Mammary epithelial cell (primary cell): ENCODE measurements at regions of chr7 and their contacts with region 1.

Region 1: GRCh38 chr7:158869876-158870275 is 13.5 kb downstream of the DYNC2I1 start:
- DNase-seq: no peak
- H3K4me3 ChIP-seq: no peak overlapping the region
- H3K27ac ChIP-seq: no peak overlapping the region
- H3K4me1 ChIP-seq: no peaks in the 10 kb centered on the region
- H3K27me3 ChIP-seq: no peaks in the 10 kb centered on the region
- CTCF ChIP-seq: no peak

Region 2: GRCh38 chr7:158789842-158790241 is 80.0 kb before region 1 on chr7:
- CTCF ChIA-PET with region 1: no interaction called
- dilution Hi-C with region 1: loop called (anchors 5 kb)
- in situ Hi-C with region 1: no loop called
- intact Hi-C with region 1: no loop called
- DNase-seq: no peak
- H3K4me3 ChIP-seq: no peak overlapping the region
- H3K27ac ChIP-seq: no peak overlapping the region
- H3K4me1 ChIP-seq: no peaks in the 10 kb centered on the region
- H3K27me3 ChIP-seq: no peaks in the 10 kb centered on the region
- CTCF ChIP-seq: no peak

Region 3: DNA sequence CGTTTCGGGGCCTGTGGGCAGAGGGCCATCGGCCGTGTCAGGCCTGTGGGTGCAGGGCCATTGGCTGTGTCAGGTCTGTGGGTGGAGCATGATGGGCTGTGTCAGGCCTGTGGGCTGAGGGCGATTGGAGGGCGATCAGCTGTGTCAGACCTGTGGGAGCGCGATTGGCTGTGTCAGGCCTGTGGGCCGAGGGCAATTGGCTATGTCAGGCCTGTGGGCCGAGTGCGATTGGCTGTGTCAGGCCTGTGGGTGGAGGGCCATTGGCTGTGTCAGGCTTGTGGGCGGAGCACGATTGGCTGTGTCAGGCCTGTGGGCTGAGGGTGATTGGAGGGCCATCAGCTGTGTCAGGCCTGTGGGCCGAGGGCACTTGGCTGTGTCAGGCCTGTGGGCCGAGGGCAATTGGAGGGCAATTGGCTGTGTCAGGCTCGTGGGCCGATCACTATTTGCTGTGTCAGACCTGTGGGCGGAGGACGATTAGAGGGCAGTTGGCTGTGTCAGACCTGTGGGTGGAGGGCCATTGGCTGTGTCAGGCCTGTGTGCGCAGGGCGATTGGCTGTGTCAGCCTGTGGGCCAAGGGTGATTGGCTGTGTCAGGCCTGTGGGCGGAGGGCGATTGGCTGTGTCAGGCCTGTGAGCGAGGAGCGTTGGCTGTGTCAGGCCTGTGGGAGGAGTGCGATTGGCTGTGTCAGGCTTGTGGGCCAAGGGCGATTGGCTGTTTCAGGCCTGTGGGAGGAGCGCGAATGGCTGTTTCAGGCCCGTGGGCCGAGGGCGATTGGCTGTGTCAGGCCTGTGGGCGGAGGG is 40.6 kb after region 1 on chr7:
- CTCF ChIA-PET with region 1: no interaction called
- dilution Hi-C with region 1: loop called (anchors 5 kb)
- in situ Hi-C with region 1: no loop called
- intact Hi-C with region 1: no loop called
- DNase-seq: no peak
- H3K4me3 ChIP-seq: no peak overlapping the region
- H3K27ac ChIP-seq: no peak overlapping the region
- H3K4me1 ChIP-seq: no peaks in the 10 kb centered on the region
- H3K27me3 ChIP-seq: no peaks in the 10 kb centered on the region
- CTCF ChIP-seq: no peak